ENCODE measurements at regions of chr17 and their contacts with region 1.

Region 1: DNA sequence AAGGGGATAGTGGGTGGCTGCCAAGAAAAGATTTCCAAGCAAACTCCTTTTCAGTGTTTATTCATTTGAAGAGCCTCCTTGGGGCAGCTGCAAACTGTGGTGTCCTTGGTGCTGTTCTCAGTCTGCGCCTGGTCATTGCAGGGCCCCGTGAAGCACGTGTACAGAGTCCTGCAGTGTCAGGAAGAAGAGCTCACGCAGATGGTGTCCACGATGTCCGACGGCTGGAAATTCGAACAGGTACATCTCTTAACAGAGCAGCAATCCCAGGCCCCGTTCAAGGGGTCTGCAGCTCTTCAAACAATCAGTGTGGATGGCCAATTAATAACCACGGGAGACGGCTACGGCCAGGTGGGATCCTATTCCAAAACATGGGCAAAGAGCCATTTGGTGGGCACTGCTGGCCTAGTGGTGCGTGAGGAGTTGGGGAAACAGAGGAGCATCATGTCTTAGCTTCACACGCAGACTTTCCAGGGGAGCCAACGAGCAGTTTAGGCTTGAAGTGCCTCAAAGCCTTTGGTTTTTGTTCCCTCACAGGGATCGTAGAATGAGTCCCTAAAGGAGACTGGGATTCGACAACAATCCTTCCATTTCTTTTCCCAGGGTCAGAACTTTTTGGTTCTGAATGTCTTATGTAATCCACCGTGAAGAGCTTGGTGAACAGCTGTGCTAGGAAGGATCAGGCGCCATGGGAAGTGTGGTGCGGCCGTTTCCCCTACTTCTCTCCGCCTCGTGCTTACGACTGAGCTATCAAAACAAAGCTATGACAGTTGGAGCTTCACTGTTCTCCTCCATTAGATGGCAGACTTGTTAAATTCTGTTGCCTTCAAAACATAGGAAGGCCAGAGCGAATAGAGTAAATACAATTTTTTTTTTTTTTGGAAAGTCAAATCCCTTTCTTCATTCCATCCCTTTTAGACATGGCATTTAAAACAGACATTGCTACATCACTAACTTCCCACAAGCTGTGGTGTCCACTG is 12.6 kb downstream of the KCTD2 start:
- DNase-seq: peak in 4 of 14 experiments; percentile 21 to 59 (median 48)
- ATAC-seq: peak; percentile 92
- H3K4me3 ChIP-seq: no peak overlapping the region
- H3K4me3 Mint-ChIP-seq: no peak overlapping the region
- H3K27ac ChIP-seq: no peak overlapping the region
- H3K27ac Mint-ChIP-seq: peak overlapping the region; percentile 61
- H3K4me1 ChIP-seq: peaks cover 6% of the 10 kb centered on the region
- H3K4me1 Mint-ChIP-seq: peaks cover 21% of the 10 kb centered on the region
- H3K27me3 ChIP-seq: no peaks in the 10 kb centered on the region
- H3K27me3 Mint-ChIP-seq: no peaks in the 10 kb centered on the region
- CTCF ChIP-seq: peak; percentile 39

Region 2: GRCh38 chr17:75199886-75200618 is 140.4 kb after region 1 on chr17:
- CTCF ChIA-PET with region 1: interaction called, 3 read pairs
- POLR2A ChIA-PET with region 1: interaction called, 3 read pairs
- intact Hi-C with region 1: loop called (anchors 2 to 5 kb)
- DNase-seq: no peak
- ATAC-seq: no peak
- H3K4me3 ChIP-seq: no peak overlapping the region
- H3K4me3 Mint-ChIP-seq: no peak overlapping the region
- H3K27ac ChIP-seq: no peak overlapping the region
- H3K27ac Mint-ChIP-seq: no peak overlapping the region
- H3K4me1 ChIP-seq: peaks cover 8% of the 10 kb centered on the region
- H3K4me1 Mint-ChIP-seq: peaks cover 7% of the 10 kb centered on the region
- H3K27me3 ChIP-seq: no peaks in the 10 kb centered on the region
- H3K27me3 Mint-ChIP-seq: no peaks in the 10 kb centered on the region
- CTCF ChIP-seq: no peak

Measured in CD4-positive, alpha-beta T cell (primary cell).